Stomach (tissue), 19 donors: ENCODE measurements at regions of chrX and their contacts with region 1.

Region 1: GRCh38 chrX:136028251-136028984 is 43.2 kb downstream of the SLC9A6 start:
- DNase-seq: peak in 1 of 2 donors; percentile 80
- H3K4me3 ChIP-seq: no peak overlapping the region
- H3K27ac ChIP-seq: peak overlapping the region in 2 of 5 donors; percentile 78 to 84
- H3K4me1 ChIP-seq: no peaks in the 10 kb centered on the region
- H3K27me3 ChIP-seq: peaks cover 0 to 4% (median 0%) of the 10 kb centered on the region in 3 donors
- CTCF ChIP-seq: peak in 5 of 7 experiments; percentile 22 to 43 (median 26)
- EP300 ChIP-seq: no peak
- POLR2A ChIP-seq: no peak

Region 2: DNA sequence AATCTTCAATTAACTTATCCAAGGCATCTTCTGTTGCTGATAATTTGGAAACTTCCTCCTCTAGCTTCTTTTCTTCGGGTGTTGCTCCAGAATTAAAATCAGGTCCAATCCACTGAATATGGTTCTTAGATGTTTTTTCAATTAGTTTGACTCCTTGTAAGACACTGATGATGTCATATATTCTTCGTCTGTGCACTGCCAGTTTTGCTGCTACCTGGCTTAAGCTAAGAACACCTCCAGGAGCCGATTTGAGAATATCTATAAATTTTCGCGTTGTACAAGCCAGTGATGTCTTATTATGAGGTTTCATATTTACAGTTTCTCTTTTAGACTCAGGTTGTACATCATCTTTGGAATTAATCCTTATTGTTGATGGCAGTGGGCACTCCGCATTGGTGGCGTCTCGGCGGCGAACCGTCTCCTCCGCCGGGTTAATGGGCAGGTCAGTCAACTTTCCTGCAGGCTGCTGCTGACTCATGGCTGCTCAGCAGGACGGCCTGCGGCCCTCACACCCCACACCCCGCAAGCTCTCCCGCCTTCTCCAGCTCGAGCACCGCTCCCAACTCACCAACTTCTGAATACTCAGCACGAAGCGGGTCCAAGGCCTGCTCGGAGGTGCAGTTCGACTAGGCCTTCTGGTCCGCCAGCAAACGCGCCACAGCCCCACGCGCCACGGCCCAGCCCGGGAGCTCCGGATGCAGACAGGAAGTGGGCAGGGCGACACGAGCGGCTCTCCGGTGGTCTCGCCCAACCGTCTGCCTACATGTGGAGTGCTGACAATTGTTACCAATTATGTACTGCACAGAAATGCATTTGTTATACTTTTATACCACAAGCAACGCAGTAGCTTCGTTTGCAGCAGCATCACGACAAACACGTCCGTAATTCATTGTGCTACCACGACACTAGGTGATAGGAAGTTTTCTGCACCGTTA is 69.7 kb after region 1 on chrX:
- intact Hi-C with region 1: no loop called
- DNase-seq: no peak
- H3K4me3 ChIP-seq: no peak overlapping the region
- H3K27ac ChIP-seq: no peak overlapping the region
- H3K4me1 ChIP-seq: no peaks in the 10 kb centered on the region
- H3K27me3 ChIP-seq: no peaks in the 10 kb centered on the region
- CTCF ChIP-seq: no peak
- EP300 ChIP-seq: no peak
- POLR2A ChIP-seq: no peak

Region 3: GRCh38 chrX:136200466-136200865 is 172.0 kb after region 1 on chrX:
- intact Hi-C with region 1: no loop called
- DNase-seq: no peak
- H3K4me3 ChIP-seq: peak overlapping the region in 2 of 4 donors; percentile 8 to 20
- H3K27ac ChIP-seq: peak overlapping the region in 4 of 5 donors; percentile 70 to 84 (median 76)
- H3K4me1 ChIP-seq: peaks cover 0 to 25% (median 20%) of the 10 kb centered on the region in 4 donors
- H3K27me3 ChIP-seq: peaks cover 0 to 7% (median 0%) of the 10 kb centered on the region in 3 donors
- CTCF ChIP-seq: peak in 2 of 7 experiments; percentile 11 to 12
- EP300 ChIP-seq: no peak
- POLR2A ChIP-seq: no peak

Region 4: GRCh38 chrX:136215559-136215958 is 187.1 kb after region 1 on chrX:
- intact Hi-C with region 1: loop called (anchors 5 kb)
- DNase-seq: no peak
- H3K4me3 ChIP-seq: no peak overlapping the region
- H3K27ac ChIP-seq: peak overlapping the region in 1 of 5 donors; percentile 31
- H3K4me1 ChIP-seq: peaks cover 0 to 4% (median 0%) of the 10 kb centered on the region in 4 donors
- H3K27me3 ChIP-seq: no peaks in the 10 kb centered on the region
- CTCF ChIP-seq: no peak
- EP300 ChIP-seq: no peak
- POLR2A ChIP-seq: no peak

Region 5: GRCh38 chrX:136963973-136964372 is 935.6 kb after region 1 on chrX:
- intact Hi-C with region 1: no loop called
- DNase-seq: no peak
- H3K4me3 ChIP-seq: no peak overlapping the region
- H3K27ac ChIP-seq: no peak overlapping the region
- H3K4me1 ChIP-seq: no peaks in the 10 kb centered on the region
- H3K27me3 ChIP-seq: no peaks in the 10 kb centered on the region
- CTCF ChIP-seq: no peak
- EP300 ChIP-seq: no peak
- POLR2A ChIP-seq: no peak